ENCODE measurements at regions of chr3 and their contacts with region 1.

Region 1: DNA sequence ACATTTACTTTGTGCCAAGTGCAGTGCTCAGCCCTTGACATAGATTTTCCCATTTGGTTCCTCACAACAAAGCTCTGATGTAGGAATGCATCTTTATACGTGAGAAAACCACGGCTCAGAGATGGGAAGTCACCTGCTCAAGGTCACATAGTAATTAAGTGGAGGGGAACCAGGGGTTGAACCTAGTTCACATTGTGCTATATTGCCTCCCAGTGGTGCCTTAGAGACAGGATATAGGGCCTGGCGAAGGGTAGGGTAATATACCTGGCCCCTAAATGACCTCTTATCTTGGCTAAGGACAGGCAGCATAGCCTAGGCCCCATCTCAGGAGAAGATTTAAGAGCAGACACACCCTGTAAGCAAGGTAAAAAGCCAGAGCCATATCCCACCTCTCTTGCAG is 71.5 kb downstream of the FOXP1 start:
- DNase-seq: no peak
- H3K4me3 ChIP-seq: no peak overlapping the region
- H3K27ac ChIP-seq: no peak overlapping the region
- H3K4me1 ChIP-seq: peaks cover 37% of the 10 kb centered on the region
- H3K27me3 ChIP-seq: no peaks in the 10 kb centered on the region
- CTCF ChIP-seq: peak in 1 of 2 donors; percentile 13

Region 2: DNA sequence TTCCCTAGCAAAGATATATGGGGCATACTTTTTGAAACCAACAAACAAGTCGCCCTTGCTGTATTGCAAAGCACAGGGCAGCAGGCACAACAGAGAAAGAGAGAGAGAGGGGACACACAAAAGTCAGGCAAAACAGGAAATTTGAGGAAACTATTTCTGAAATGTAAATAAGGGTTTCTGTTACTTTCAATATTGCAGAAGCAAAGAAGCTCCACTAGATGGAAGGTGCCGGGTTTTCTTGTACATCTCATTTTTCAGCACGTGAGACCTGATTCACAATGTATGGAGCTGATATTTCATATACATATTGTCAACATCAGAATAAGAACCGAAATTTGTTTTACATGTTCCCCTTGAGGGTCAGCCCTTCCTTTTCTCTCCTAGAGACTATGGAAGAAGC is 55.8 kb before region 1 on chr3:
- CTCF ChIA-PET with region 1: no interaction called
- dilution Hi-C with region 1: no loop called
- in situ Hi-C with region 1: no loop called
- intact Hi-C with region 1: no loop called
- DNase-seq: no peak
- H3K4me3 ChIP-seq: peak overlapping the region in 2 of 3 experiments; percentile 18 to 22
- H3K27ac ChIP-seq: no peak overlapping the region
- H3K4me1 ChIP-seq: peaks cover 9% of the 10 kb centered on the region
- H3K27me3 ChIP-seq: no peaks in the 10 kb centered on the region
- CTCF ChIP-seq: peak in 1 of 2 donors; percentile 16

Region 3: GRCh38 chr3:71537211-71537611 is 25.2 kb after region 1 on chr3:
- CTCF ChIA-PET with region 1: no interaction called
- dilution Hi-C with region 1: no loop called
- in situ Hi-C with region 1: no loop called
- intact Hi-C with region 1: loop called (anchors 2 kb)
- DNase-seq: peak; percentile 88
- H3K4me3 ChIP-seq: no peak overlapping the region
- H3K27ac ChIP-seq: peak overlapping the region; percentile 35
- H3K4me1 ChIP-seq: peaks cover 53% of the 10 kb centered on the region
- H3K27me3 ChIP-seq: no peaks in the 10 kb centered on the region
- CTCF ChIP-seq: no peak

Measured in mammary epithelial cell (primary cell).